Heart left ventricle (tissue), 16 donors: ENCODE measurements at regions of chr6 and their contacts with region 1.

Region 1: DNA sequence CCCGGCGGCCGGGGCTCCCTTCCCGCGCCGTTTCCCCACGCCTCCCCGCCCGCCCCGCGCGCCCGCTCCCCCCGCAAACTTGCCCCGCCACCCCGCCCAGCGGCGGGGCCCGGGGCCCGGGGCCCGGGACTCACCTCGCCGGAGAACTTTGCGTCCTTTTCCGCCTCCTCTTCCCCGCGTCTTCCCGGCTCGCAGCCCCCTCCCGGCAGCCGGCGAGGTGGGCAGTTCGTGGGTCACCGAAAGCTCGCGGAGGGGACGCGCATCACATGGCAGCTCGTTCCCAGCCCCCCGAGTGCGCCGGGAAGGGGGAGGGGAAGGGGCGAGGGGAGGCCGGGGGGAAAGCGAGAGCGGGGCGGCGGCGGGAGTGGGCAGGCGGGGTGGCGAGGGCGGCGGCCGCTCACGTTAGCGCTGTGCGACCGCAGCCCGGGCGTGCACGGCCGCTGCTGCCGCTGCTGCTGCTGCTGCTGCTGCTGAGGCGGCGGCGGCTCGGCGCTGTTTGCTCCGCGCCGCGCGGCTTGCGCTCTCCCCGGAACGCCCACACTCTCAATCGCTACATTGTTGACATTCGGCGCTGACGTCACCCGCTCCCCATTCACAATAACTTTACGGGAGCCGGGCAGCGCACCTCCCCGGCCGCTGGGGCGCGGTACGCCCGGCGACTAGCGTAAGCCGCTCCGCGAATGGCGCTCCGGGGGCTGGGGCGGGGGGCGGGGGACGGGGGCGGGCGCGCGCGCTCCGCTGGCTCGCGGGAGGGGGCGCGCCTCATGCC is at the start of gene BACH2:
- DNase-seq: peak; percentile 90 to 92 (median 91)
- ATAC-seq: peak; percentile 76 to 83 (median 82)
- H3K4me3 ChIP-seq: peak within 1 kb of the TSS; percentile 66 to 93 (median 80)
- H3K27ac ChIP-seq: peak within 1 kb of the TSS; percentile 67 to 93 (median 84)
- H3K4me1 ChIP-seq: peaks cover 0 to 17% (median 7%) of the 10 kb centered on the region in 12 donors
- H3K27me3 ChIP-seq: peaks cover 0 to 30% (median 0%) of the 10 kb centered on the region in 9 donors
- CTCF ChIP-seq: peak in 6 of 12 donors; percentile 11 to 34 (median 24)
- POLR2A ChIP-seq: peak in 1 of 2 donors; percentile 49
- total RNA-seq, gene BACH2: 0.76 to 8.4 (median 4.0) TPM

Region 2: GRCh38 chr6:89970609-89971337 is 325.8 kb before region 1 on chr6:
- intact Hi-C with region 1: loop called in 9 of 10 experiments (anchors 2 to 10 kb)
- DNase-seq: peak in 3 of 5 donors; percentile 30 to 40 (median 39)
- ATAC-seq: peak; percentile 62 to 84 (median 78)
- H3K4me3 ChIP-seq: no peak overlapping the region
- H3K27ac ChIP-seq: no peak overlapping the region
- H3K4me1 ChIP-seq: peaks cover 0 to 28% (median 3%) of the 10 kb centered on the region in 12 donors
- H3K27me3 ChIP-seq: no peaks in the 10 kb centered on the region
- CTCF ChIP-seq: peak; percentile 43 to 73 (median 63)
- POLR2A ChIP-seq: no peak

Region 3: GRCh38 chr6:90098001-90098531 is 198.5 kb before region 1 on chr6:
- intact Hi-C with region 1: loop called in 4 of 10 experiments (anchors 5 to 10 kb)
- DNase-seq: peak in 4 of 5 donors; percentile 29 to 57 (median 50)
- ATAC-seq: peak; percentile 85 to 94 (median 88)
- H3K4me3 ChIP-seq: no peak overlapping the region
- H3K27ac ChIP-seq: peak overlapping the region in 11 of 12 donors; percentile 44 to 84 (median 68)
- H3K4me1 ChIP-seq: peaks cover 0 to 43% (median 22%) of the 10 kb centered on the region in 12 donors
- H3K27me3 ChIP-seq: no peaks in the 10 kb centered on the region
- CTCF ChIP-seq: peak in 11 of 12 donors; percentile 3 to 66 (median 42)
- POLR2A ChIP-seq: no peak

Region 4: GRCh38 chr6:90216072-90216977 is 80.2 kb before region 1 on chr6:
- intact Hi-C with region 1: loop called in 5 of 10 experiments (anchors 2 to 5 kb)
- DNase-seq: peak in 1 of 5 donors; percentile 16
- ATAC-seq: no peak
- H3K4me3 ChIP-seq: no peak overlapping the region
- H3K27ac ChIP-seq: peak overlapping the region in 7 of 12 donors; percentile 12 to 88 (median 36)
- H3K4me1 ChIP-seq: peaks cover 0 to 56% (median 37%) of the 10 kb centered on the region in 12 donors
- H3K27me3 ChIP-seq: no peaks in the 10 kb centered on the region
- CTCF ChIP-seq: no peak
- POLR2A ChIP-seq: no peak

Region 5: DNA sequence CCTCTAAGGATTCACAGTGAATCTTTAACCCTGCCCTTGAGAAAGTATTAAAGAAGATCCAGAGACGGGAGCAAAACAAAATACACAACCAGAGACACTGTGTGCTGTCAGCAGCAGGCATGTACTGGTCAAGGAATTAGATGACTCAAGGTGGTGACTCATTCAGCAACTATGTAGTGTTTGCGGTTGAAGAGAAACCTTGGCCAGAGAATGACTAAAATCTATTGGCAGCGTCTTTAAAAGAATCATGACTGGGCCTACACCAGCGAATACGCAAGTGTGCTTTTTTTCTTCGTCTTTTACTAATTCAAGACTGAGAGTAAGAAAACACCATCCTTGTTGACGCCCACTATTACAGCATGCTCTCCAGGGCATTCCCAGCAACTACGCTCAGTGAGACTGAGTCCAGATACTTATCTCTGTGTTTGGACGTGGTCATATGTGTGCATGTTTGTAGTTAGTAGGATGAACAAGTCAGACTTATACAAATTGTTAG is 72.5 kb after region 1 on chr6:
- intact Hi-C with region 1: loop called in 1 of 10 experiments (anchors 2 kb)
- DNase-seq: peak in 4 of 5 donors; percentile 54 to 71 (median 65)
- ATAC-seq: peak; percentile 95 to 98 (median 97)
- H3K4me3 ChIP-seq: no peak overlapping the region
- H3K27ac ChIP-seq: peak overlapping the region in 6 of 12 donors; percentile 4 to 77 (median 44)
- H3K4me1 ChIP-seq: peaks cover 0 to 14% (median 0%) of the 10 kb centered on the region in 12 donors
- H3K27me3 ChIP-seq: no peaks in the 10 kb centered on the region
- CTCF ChIP-seq: no peak
- POLR2A ChIP-seq: no peak

Region 6: DNA sequence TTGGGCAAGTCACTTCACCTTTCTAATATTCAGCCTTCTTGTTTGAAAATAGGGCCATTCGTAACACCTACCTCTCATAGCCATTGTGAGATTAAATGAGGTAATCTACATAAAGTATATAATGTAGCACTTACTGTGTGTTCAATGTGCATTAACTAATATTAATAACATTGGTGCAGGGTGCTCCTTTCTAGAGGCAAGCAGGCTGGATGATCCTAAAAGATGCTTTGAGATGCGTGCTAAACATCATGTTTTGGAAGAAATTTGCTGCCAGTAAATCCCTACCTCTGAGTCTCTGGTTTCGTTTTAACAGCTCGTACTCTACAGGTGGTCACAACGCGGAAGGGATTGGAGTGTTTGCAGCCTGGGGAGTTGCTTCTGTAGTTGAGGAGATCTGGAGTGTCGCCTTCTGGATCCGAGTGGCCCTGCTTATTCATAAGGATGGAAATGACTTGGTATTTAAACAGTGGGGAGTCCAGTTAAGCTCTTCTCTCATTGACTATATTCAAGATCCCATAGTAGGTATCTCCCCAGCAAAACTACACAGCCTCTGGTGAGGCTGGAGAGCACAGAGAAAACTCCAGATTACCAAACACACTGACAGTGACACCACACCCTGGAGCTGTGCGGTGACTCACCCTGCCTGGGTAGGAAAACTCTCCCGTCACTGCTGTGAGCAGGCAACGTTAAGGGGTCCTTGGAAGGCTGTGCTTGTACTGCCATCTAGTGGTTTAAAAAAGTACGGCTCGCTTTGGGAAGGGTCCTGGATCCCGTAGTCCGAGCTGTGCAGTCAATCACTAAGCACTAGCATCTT is 182.5 kb after region 1 on chr6:
- intact Hi-C with region 1: loop called in 8 of 10 experiments (anchors 5 to 10 kb)
- DNase-seq: peak; percentile 83 to 93 (median 85)
- ATAC-seq: peak; percentile 97 to 100 (median 99)
- H3K4me3 ChIP-seq: no peak overlapping the region
- H3K27ac ChIP-seq: no peak overlapping the region
- H3K4me1 ChIP-seq: peaks cover 0 to 10% (median 2%) of the 10 kb centered on the region in 12 donors
- H3K27me3 ChIP-seq: no peaks in the 10 kb centered on the region
- CTCF ChIP-seq: peak; percentile 86 to 97 (median 92)
- POLR2A ChIP-seq: no peak